ENCODE measurements at regions of chr14 and their contacts with region 1.

Region 1: DNA sequence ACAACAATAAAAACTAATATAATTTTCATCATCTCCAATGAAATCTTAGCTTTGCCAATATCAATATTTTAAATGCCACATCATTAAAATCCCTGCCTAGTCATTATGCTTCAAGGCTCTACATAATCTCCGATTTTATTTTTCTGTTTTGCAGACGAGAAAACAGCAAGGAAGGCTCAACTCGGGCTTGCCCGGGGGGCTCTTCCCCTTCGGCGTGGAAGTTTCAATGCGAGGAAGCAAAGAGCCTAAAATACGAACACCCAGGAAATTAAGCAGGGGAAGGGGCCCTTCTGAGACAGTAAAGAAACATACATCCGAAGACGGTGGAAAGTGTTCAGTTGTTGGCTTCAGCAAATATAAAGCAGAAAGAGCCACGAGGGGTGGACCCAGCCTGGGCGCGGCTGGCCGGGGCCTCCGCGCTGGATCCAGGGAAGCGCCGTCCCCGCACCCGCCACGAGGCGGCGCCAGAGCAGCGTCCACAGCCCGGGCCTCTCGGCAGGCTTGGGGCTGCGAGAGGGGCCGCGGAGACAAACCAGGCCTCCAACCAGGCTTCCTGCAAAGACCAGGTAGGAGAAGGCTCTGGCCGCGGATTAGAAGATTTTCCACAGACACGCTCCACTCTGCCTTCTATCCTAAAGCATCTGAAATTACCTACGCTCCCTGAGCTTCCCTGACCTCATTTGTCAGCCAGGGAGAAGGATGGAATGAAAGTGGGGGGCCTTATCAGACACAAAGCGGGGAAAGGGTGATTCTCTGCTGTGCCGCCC is 77.2 kb downstream of the SERPINA3 start:
- DNase-seq: peak; percentile 42 to 81
- H3K4me3 ChIP-seq: no peak overlapping the region
- H3K4me3 Mint-ChIP-seq: no peak overlapping the region
- H3K27ac Mint-ChIP-seq: no peak overlapping the region
- H3K4me1 ChIP-seq: no peaks in the 10 kb centered on the region
- H3K4me1 Mint-ChIP-seq: no peaks in the 10 kb centered on the region
- H3K27me3 ChIP-seq: no peaks in the 10 kb centered on the region
- H3K27me3 Mint-ChIP-seq: no peaks in the 10 kb centered on the region
- CTCF ChIP-seq: peak; percentile 92 to 94

Region 2: GRCh38 chr14:94748667-94749347 is 59.4 kb after region 1 on chr14:
- CTCF ChIA-PET with region 1: interaction called, 3 read pairs
- POLR2A ChIA-PET with region 1: no interaction called
- intact Hi-C with region 1: loop called (anchors 1 kb)
- DNase-seq: peak in 1 of 2 experiments; percentile 58
- H3K4me3 ChIP-seq: no peak overlapping the region
- H3K4me3 Mint-ChIP-seq: no peak overlapping the region
- H3K27ac Mint-ChIP-seq: no peak overlapping the region
- H3K4me1 ChIP-seq: no peaks in the 10 kb centered on the region
- H3K4me1 Mint-ChIP-seq: no peaks in the 10 kb centered on the region
- H3K27me3 ChIP-seq: no peaks in the 10 kb centered on the region
- H3K27me3 Mint-ChIP-seq: peaks cover 10% of the 10 kb centered on the region
- CTCF ChIP-seq: peak; percentile 69 to 72

Region 3: DNA sequence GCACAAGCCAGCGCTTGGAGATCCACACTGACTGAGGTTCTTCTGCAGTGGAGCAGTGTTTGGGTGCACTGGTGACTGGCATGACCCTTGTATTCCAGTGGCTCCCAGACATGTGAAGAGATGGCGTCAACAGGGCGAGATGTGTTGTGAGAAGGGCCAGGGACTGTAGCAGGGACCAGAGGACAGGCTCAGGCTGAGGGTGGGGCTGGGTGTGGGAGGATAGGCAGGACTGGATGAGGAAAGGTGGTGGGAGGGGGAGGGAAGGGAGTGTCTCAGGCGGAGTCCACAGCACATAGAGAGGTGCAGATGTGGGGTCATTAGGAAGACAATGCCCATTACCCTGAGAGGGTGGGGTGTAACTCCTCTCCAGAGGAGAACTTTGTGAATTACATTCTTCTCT is 389.4 kb after region 1 on chr14:
- CTCF ChIA-PET with region 1: no interaction called
- POLR2A ChIA-PET with region 1: no interaction called
- intact Hi-C with region 1: loop called (anchors 10 kb)
- DNase-seq: no peak
- H3K4me3 ChIP-seq: no peak overlapping the region
- H3K4me3 Mint-ChIP-seq: no peak overlapping the region
- H3K27ac Mint-ChIP-seq: no peak overlapping the region
- H3K4me1 ChIP-seq: no peaks in the 10 kb centered on the region
- H3K4me1 Mint-ChIP-seq: no peaks in the 10 kb centered on the region
- H3K27me3 ChIP-seq: no peaks in the 10 kb centered on the region; the same call in 1 of the 2 replicates
- H3K27me3 Mint-ChIP-seq: no peaks in the 10 kb centered on the region
- CTCF ChIP-seq: no peak

Region 4: GRCh38 chr14:95098984-95099599 is 409.7 kb after region 1 on chr14:
- CTCF ChIA-PET with region 1: no interaction called
- POLR2A ChIA-PET with region 1: no interaction called
- intact Hi-C with region 1: loop called (anchors 1 kb)
- DNase-seq: peak; percentile 47 to 52
- H3K4me3 ChIP-seq: no peak overlapping the region
- H3K4me3 Mint-ChIP-seq: no peak overlapping the region
- H3K27ac Mint-ChIP-seq: no peak overlapping the region
- H3K4me1 ChIP-seq: no peaks in the 10 kb centered on the region
- H3K4me1 Mint-ChIP-seq: no peaks in the 10 kb centered on the region
- H3K27me3 ChIP-seq: no peaks in the 10 kb centered on the region
- H3K27me3 Mint-ChIP-seq: no peaks in the 10 kb centered on the region
- CTCF ChIP-seq: peak; percentile 49 to 79

Measured in Caco-2 (cell line).